ENCODE measurements at regions of chr9 and their contacts with region 1.

Region 1: DNA sequence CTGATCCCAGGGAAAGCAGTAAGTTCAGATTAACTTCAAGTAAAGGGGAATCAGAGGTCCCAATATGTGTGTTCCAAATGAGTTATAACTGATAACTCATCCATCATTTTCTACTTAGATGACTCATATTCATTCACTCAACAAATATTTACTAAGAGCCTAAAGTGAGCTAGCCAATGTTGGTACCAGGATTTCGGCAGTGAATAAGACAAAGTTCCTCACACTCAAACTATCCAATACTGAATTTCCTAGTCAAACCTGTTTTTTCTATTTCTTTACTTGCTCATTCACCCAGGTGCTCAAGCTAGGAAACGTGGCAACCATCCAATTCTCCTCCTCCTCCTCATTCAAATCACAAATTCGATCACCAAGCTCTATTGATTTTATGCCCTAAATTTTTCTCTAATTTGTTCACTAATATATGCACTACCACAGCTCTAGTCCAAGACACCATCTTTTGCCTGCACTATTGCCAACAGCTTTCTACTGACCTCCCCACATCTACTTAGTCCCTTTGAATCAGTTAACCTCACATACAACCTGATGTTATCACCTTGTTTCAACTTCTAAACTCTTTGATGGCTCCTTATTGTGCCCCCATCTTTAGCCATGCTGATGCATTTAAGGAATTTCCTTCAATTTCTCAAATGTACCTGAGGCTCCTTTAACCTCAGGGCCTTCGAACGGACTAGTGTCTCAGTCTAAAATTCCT is 25.6 kb downstream of the FBXW2 start:
- DNase-seq: no peak
- H3K4me3 ChIP-seq: no peak overlapping the region
- H3K27ac ChIP-seq: no peak overlapping the region
- H3K4me1 ChIP-seq: no peaks in the 10 kb centered on the region
- H3K27me3 ChIP-seq: no peaks in the 10 kb centered on the region
- CTCF ChIP-seq: no peak
- EP300 ChIP-seq: no peak
- POLR2A ChIP-seq: no peak

Region 2: GRCh38 chr9:120944434-120944843 is 176.8 kb after region 1 on chr9:
- in situ Hi-C with region 1: loop called (anchors 10 to 25 kb)
- intact Hi-C with region 1: no loop called
- DNase-seq: no peak
- H3K4me3 ChIP-seq: no peak overlapping the region
- H3K27ac ChIP-seq: no peak overlapping the region
- H3K4me1 ChIP-seq: peaks cover 0 to 14% (median 5%) of the 10 kb centered on the region in 4 donors
- H3K27me3 ChIP-seq: no peaks in the 10 kb centered on the region
- CTCF ChIP-seq: no peak
- EP300 ChIP-seq: no peak
- POLR2A ChIP-seq: no peak

Region 3: GRCh38 chr9:121369595-121370265 is 602.1 kb after region 1 on chr9 and contains the start of gene STOM:
- in situ Hi-C with region 1: no loop called
- intact Hi-C with region 1: no loop called
- DNase-seq: peak; percentile 81
- H3K4me3 ChIP-seq: peak within 1 kb of the TSS; percentile 33 to 53 (median 44)
- H3K27ac ChIP-seq: peak within 1 kb of the TSS; percentile 92 to 96 (median 92)
- H3K4me1 ChIP-seq: peaks cover 28 to 76% (median 48%) of the 10 kb centered on the region in 4 donors
- H3K27me3 ChIP-seq: no peaks in the 10 kb centered on the region
- CTCF ChIP-seq: no peak
- EP300 ChIP-seq: no peak
- POLR2A ChIP-seq: peak; percentile 96
- total RNA-seq, gene STOM: 78.2 to 195 (median 111) TPM

Measured in transverse colon (tissue), 4 donors.